ENCODE measurements at regions of chr10 and their contacts with region 1.

Region 1: GRCh38 chr10:9028231-9028630 is 973.7 kb downstream of the GATA3 start:
- DNase-seq: no peak
- H3K4me3 ChIP-seq: no peak overlapping the region
- H3K27ac ChIP-seq: no peak overlapping the region
- H3K4me1 ChIP-seq: peaks cover 12% of the 10 kb centered on the region; the same call in 1 of the 2 replicates
- H3K27me3 ChIP-seq: no peaks in the 10 kb centered on the region
- CTCF ChIP-seq: no peak

Region 2: DNA sequence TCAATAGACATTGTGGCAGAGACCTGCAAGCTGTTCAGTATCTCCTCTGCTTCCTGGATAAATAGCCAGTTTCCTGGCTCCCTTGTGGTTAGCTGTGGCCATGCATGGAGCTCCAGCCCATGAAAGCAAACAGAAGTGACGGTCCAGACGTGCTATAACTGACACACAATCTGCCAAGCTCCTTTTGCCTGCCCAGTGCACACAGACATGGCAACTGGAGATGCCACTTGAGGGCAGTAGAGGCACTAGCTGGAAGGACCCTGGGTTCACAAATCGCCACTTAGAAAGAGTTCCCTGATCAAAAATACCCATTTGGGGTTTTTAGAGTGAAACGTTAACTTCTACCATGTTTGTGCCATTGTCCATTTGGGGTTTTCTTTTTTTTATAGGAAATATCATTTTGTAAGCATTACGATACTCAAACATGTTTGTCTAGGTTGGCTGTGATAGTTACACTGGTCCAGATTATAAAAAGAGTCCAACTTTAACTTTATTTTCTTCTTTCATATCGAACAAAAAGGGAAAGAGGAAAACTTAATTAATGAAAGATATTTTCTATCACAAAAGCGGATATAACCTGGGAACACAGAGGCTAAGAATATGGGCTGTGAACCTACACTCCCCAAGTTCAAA is 1271.8 kb before region 1 on chr10:
- CTCF ChIA-PET with region 1: no interaction called
- POLR2A ChIA-PET with region 1: interaction called, 11 read pairs
- intact Hi-C with region 1: no loop called
- DNase-seq: peak in 1 of 2 experiments; percentile 9
- H3K4me3 ChIP-seq: no peak overlapping the region
- H3K27ac ChIP-seq: no peak overlapping the region
- H3K4me1 ChIP-seq: no peaks in the 10 kb centered on the region
- H3K27me3 ChIP-seq: no peaks in the 10 kb centered on the region
- CTCF ChIP-seq: peak; percentile 34; the same call in 1 of the 2 replicates

Measured in PC-9 (cell line).